Ascending aorta (tissue), 2 donors: ENCODE measurements at regions of chr9 and their contacts with region 1.

Region 1: DNA sequence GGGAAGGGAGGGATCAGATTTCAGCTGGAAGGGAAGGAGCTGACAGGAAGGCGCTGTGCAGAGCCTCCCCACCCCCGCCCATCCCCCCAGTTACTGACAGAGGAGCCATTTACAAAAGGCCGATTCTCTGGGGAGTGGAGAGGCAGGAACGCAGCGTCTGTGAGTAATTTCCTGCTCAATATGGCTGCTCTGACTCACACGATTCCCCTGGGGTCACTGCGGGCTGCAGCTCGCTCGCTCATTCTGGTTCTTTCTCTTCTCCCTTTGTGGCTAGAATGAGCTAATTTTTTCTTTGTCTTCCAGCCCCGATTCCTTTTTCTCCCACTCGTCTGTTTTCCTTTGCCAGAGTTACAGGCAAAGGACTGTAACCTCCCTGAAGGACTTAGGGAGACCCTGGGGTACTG is 28.8 kb downstream of the PTPA start:
- DNase-seq: peak; percentile 91 to 98
- H3K4me3 ChIP-seq: peak overlapping the region; percentile 52 to 56
- H3K27ac ChIP-seq: peak overlapping the region; percentile 98
- H3K4me1 ChIP-seq: peaks cover 49 to 71% of the 10 kb centered on the region in 2 donors
- H3K27me3 ChIP-seq: no peaks in the 10 kb centered on the region
- CTCF ChIP-seq: no peak

Region 2: DNA sequence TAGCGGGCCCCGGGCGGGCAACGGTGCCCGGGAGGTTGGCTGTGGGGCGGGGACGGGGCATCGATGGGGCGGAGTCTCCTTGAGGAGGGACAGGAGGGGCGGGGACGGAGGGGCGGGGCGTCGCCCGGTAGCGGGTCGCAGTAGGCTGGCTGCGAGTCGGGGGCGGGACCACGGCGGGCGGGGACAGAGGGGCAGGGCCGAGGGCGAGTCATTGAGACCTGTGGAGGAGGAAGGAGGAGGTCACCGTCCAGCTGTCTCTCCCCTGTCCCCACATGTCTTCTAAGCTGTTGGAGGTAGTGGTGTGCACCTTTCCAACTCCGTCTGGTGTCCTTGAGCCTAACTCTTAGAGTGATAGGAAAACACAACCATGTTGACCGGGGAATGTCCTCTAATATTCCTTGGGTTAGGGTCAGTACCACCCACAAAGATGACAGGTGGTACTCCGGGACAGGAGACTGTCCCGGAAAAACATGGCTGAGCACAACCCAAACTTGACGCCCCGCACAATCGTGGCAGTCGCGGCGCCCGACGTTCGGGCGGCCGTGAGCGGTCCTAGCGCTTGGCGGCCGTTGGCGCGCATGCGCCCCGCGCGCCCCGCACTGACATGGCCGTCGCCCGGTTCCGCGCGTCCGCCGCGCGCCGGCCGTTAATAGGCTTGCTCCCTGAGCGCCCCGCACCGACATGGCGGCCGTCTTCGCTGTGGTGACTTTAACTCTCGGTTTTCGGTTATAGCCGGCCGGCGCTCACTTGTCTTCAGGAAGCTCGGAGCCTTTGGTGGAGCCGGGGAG is 29.1 kb before region 1 on chr9 and contains the starts of genes CRAT and PTPA:
- intact Hi-C with region 1: loop called (anchors 2 kb)
- DNase-seq: peak; percentile 86 to 98
- H3K4me3 ChIP-seq: peak within 1 kb of the TSS; percentile 78 to 83
- H3K27ac ChIP-seq: peak within 1 kb of the TSS; percentile 88 to 91
- H3K4me1 ChIP-seq: peaks cover 7 to 22% of the 10 kb centered on the region in 2 donors
- H3K27me3 ChIP-seq: no peaks in the 10 kb centered on the region
- CTCF ChIP-seq: no peak
- total RNA-seq, gene CRAT: 110 TPM
- total RNA-seq, gene PTPA: 61.6 TPM

Region 3: GRCh38 chr9:129202613-129203555 is 62.9 kb after region 1 on chr9:
- intact Hi-C with region 1: loop called (anchors 2 kb)
- DNase-seq: peak; percentile 42 to 92
- H3K4me3 ChIP-seq: peak overlapping the region; percentile 54 to 80
- H3K27ac ChIP-seq: peak overlapping the region; percentile 81 to 96
- H3K4me1 ChIP-seq: peaks cover 5 to 8% of the 10 kb centered on the region in 2 donors
- H3K27me3 ChIP-seq: no peaks in the 10 kb centered on the region
- CTCF ChIP-seq: no peak

Region 4: GRCh38 chr9:129320575-129321263 is 180.7 kb after region 1 on chr9:
- intact Hi-C with region 1: loop called (anchors 2 kb)
- DNase-seq: peak in 1 of 2 donors; percentile 88
- H3K4me3 ChIP-seq: peak overlapping the region; percentile 54 to 60
- H3K27ac ChIP-seq: peak overlapping the region; percentile 92 to 94
- H3K4me1 ChIP-seq: peaks cover 30 to 66% of the 10 kb centered on the region in 2 donors
- H3K27me3 ChIP-seq: no peaks in the 10 kb centered on the region
- CTCF ChIP-seq: peak in 2 of 3 experiments; percentile 2 to 17

Region 5: GRCh38 chr9:129413537-129414376 is 273.8 kb after region 1 on chr9:
- intact Hi-C with region 1: loop called (anchors 2 kb)
- DNase-seq: peak; percentile 96 to 99
- H3K4me3 ChIP-seq: peak overlapping the region; percentile 72 to 82
- H3K27ac ChIP-seq: peak overlapping the region; percentile 99 to 100
- H3K4me1 ChIP-seq: peaks cover 12 to 28% of the 10 kb centered on the region in 2 donors
- H3K27me3 ChIP-seq: no peaks in the 10 kb centered on the region
- CTCF ChIP-seq: peak in 2 of 3 experiments; percentile 2 to 26

Region 6: DNA sequence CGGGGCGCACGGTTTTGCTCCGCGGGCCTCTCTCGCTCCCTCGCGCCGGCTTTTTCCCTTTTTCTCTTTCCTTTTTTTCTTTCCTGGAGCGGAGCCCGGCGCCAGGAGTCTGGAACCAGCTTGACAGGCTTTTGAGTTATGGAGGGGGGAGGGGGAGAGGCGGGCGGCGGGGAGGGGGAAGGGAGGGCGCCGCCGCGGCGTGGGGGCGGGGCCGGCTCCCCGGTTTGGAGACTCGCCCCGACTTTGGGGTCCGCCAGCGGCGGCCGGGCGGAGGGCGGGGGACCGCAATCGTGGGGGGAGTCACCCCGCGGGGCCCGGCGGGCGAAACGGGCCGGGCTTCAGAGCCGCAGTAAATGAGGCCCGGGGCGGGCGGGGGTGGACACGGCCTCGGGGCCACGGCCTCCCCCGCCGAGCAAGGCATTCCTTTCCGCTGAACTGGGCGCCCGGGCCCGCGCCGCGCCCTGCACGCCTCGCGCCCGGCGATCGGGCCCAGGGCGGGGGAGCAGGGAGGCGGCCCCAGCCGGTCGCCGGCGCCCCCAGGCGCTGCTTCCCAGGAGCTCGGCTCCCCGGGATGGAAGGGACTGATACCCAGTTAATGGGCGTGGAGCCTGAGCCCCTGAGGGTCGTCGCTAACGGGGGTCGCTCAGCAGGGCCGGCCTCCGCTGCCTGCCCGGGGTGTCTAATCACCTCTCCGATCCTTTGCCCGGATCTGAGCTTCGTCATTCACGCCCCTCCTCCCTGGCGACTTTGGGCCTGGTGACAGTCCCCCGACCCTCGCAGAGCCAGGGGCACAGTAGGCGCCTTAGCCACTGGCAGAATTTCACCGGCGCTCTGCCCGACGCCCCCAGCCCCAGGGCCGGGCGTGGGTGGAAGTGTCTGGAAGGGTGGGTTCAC is 342.8 kb after region 1 on chr9:
- intact Hi-C with region 1: loop called (anchors 1 kb)
- DNase-seq: peak in 1 of 2 donors; percentile 93
- H3K4me3 ChIP-seq: peak overlapping the region; percentile 54 to 63
- H3K27ac ChIP-seq: peak overlapping the region; percentile 98 to 100
- H3K4me1 ChIP-seq: peaks cover 32 to 64% of the 10 kb centered on the region in 2 donors
- H3K27me3 ChIP-seq: no peaks in the 10 kb centered on the region
- CTCF ChIP-seq: peak in 1 of 3 experiments; percentile 19